Gastrocnemius medialis (tissue), 4 donors: ENCODE measurements at regions of chr13 and their contacts with region 1.

Region 1: GRCh38 chr13:23579072-23579895 is 9.1 kb downstream of the TNFRSF19 start:
- DNase-seq: peak; percentile 78 to 88
- ATAC-seq: peak; percentile 93
- H3K4me3 ChIP-seq: peak overlapping the region; percentile 68 to 97 (median 84)
- H3K27ac ChIP-seq: peak overlapping the region; percentile 84 to 92 (median 86)
- H3K4me1 ChIP-seq: peaks cover 0 to 8% of the 10 kb centered on the region in 2 donors
- H3K27me3 ChIP-seq: no peaks in the 10 kb centered on the region
- CTCF ChIP-seq: no peak
- POLR2A ChIP-seq: peak; percentile 68 to 75

Region 2: GRCh38 chr13:23175920-23176319 is 403.4 kb before region 1 on chr13:
- in situ Hi-C with region 1: no loop called
- intact Hi-C with region 1: loop called (anchors 5 kb)
- DNase-seq: no peak
- ATAC-seq: no peak
- H3K4me3 ChIP-seq: no peak overlapping the region
- H3K27ac ChIP-seq: no peak overlapping the region
- H3K4me1 ChIP-seq: peaks cover 11 to 14% of the 10 kb centered on the region in 2 donors
- H3K27me3 ChIP-seq: no peaks in the 10 kb centered on the region
- CTCF ChIP-seq: no peak
- POLR2A ChIP-seq: no peak

Region 3: DNA sequence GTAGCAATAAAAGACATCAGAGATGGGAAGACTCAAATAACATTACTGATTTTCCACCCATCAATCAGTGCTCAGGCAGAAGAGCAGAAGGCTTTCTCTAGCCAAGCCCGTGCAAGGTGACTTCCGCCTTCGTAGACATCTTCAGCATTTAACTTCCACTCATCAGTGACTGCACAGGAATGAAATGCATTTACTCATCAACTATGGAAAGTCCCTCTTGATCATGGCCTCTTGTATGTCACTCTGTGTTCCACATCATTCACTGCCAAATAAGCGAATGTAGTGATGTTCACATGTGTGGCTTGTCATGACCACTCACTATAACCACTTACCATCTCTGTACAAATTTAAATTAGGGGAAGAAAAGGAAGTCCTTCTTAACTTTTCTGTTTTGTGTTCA is 195.2 kb before region 1 on chr13:
- in situ Hi-C with region 1: loop called in 1 of 4 experiments (anchors 10 kb)
- intact Hi-C with region 1: loop called (anchors 10 kb)
- DNase-seq: no peak
- ATAC-seq: no peak
- H3K4me3 ChIP-seq: no peak overlapping the region
- H3K27ac ChIP-seq: no peak overlapping the region
- H3K4me1 ChIP-seq: peaks cover 10 to 26% of the 10 kb centered on the region in 2 donors
- H3K27me3 ChIP-seq: no peaks in the 10 kb centered on the region
- CTCF ChIP-seq: no peak
- POLR2A ChIP-seq: no peak

Region 4: DNA sequence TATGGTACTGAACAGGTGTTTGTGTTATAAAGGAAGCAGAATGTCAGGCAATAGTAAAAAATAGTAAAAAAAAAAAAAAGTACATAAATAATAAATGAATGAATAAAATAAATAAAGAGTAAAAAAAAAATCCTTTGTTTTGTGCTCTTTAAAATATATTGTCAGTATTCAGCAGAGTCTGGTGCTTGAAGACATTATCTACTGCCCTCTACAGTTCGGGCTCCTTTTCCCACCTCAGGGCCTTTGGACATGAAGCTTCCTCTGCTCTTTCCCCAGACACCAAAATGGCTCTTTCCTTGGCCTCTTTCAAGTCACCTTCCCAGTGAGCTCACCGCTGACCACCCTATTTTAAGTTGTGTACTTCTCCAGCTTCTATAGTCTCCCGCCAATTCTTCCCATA is 128.4 kb after region 1 on chr13:
- in situ Hi-C with region 1: no loop called
- intact Hi-C with region 1: loop called (anchors 10 kb)
- DNase-seq: no peak
- ATAC-seq: no peak
- H3K4me3 ChIP-seq: no peak overlapping the region
- H3K27ac ChIP-seq: no peak overlapping the region
- H3K4me1 ChIP-seq: peaks cover 4 to 7% of the 10 kb centered on the region in 2 donors
- H3K27me3 ChIP-seq: no peaks in the 10 kb centered on the region
- CTCF ChIP-seq: no peak
- POLR2A ChIP-seq: no peak

Region 5: DNA sequence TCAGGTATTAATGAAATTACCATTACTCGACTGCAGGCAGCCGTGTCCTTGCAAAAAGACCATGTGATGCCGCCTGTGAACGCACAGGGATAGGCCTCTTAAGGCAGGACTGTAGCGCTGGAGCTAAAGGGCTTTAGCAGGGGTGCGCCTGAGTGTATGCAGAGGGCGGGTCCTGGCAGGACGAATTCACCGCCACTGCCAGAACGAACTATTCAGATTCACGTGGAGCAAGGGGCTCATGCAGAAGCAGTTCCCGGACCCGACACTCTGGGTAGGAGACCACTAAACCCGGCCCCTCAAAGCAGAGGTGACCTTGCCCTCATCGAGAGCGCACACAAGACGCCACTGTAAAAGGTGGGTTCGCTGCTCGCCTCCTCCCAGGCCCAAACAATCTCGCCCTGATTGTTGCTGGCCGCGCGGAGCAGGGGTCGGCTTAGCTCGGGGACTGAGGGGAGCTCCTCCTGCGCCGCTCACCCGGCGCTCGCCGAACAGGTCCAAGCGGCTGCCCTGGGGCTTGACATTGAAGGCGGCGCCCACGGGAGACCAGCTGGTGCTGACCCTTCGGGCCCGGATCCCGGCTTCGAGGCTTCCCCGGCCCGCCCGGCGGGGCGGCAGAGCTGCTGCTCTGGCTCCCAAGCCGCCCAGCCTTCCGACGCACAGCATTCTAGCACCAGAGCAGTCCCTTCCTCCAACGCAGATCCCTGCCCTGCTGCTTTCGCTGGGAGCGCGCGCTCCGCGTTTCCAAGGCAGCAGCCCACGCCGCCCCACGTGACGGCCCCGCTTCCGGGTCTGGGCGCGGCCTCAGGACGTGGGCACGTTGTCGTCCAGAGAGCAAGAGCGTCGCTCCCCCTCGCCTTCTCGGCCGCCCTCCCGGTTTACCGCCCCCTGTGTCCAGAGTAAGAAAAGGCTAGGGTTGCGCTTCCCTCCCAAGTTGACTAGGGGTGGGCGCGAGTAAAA is 309.7 kb after region 1 on chr13 and contains the start of gene MIPEP:
- in situ Hi-C with region 1: loop called in 1 of 4 experiments (anchors 25 kb)
- intact Hi-C with region 1: loop called (anchors 5 kb)
- DNase-seq: peak; percentile 83 to 89
- ATAC-seq: peak; percentile 94 to 97
- H3K4me3 ChIP-seq: peak within 1 kb of the TSS; percentile 67 to 99 (median 86)
- H3K27ac ChIP-seq: peak within 1 kb of the TSS; percentile 81 to 88 (median 84)
- H3K4me1 ChIP-seq: peaks cover 7 to 15% of the 10 kb centered on the region in 2 donors
- H3K27me3 ChIP-seq: no peaks in the 10 kb centered on the region
- CTCF ChIP-seq: peak; percentile 54 to 83 (median 71)
- POLR2A ChIP-seq: peak; percentile 73 to 79
- total RNA-seq, gene MIPEP: 9.2 to 23.1 (median 14.0) TPM